B cell (primary cell): ENCODE measurements at regions of chr22 and their contacts with region 1.

Region 1: DNA sequence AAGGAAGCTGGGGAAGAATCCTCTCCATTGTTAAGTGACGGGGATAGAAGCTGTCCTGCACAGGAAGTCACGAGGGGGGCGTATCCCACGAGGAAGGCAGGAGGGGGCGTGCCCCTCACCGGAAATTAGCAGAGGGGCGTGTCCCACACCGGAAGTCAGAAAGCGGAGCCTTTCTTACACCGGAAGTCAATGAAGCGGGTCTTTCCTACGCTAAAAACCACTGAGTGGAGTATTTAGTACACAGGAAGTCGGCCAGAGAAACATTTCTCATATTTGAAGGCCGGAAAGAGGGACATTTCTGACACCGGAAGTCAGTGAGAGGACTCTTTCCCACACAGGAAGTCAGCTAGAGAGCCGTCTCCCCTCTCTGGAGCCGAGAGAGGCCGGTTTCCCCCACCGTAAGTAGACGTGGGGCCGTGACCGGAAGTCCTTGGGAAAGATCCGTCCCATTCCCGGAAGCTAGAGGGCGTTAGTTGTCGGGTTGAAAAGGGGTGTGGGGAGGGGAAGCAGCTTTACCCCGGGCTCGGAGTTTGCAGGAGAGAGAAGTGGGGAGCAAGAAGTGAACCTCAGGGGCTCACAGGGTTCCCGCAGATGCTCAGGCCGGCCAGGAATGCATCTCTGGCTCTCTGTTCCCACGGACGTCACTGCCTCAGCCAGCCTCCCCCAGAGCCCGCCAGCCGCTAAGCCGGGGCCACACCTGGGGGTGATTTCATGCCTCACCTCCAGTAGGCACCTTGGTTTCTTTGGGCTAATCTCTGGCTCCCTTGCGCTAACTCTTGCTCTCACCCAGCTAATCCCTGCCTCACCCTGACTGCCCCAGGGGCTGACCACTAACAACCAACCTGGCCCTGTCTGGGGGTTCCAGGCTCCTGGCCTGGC is 15.4 kb downstream of the MIAT start:
- DNase-seq: peak; percentile 94
- ATAC-seq: peak; percentile 70
- H3K4me3 ChIP-seq: peak overlapping the region; percentile 75 to 94 (median 89)
- H3K4me3 Mint-ChIP-seq: peak overlapping the region; percentile 98
- H3K27ac ChIP-seq: peak overlapping the region; percentile 93 to 97
- H3K27ac Mint-ChIP-seq: peak overlapping the region; percentile 99
- H3K4me1 ChIP-seq: peaks cover 59 to 88% of the 10 kb centered on the region in 2 donors
- H3K4me1 Mint-ChIP-seq: peaks cover 87% of the 10 kb centered on the region
- H3K27me3 ChIP-seq: no peaks in the 10 kb centered on the region
- H3K27me3 Mint-ChIP-seq: no peaks in the 10 kb centered on the region
- CTCF ChIP-seq: peak; percentile 14

Region 2: GRCh38 chr22:26428515-26429457 is 244.0 kb before region 1 on chr22 and contains the start of gene ASPHD2:
- CTCF ChIA-PET with region 1: no interaction called
- POLR2A ChIA-PET with region 1: interaction called, 5 read pairs
- intact Hi-C with region 1: loop called (anchors 1 kb)
- DNase-seq: peak; percentile 95
- ATAC-seq: peak; percentile 78
- H3K4me3 ChIP-seq: peak within 1 kb of the TSS; percentile 30 to 100 (median 82)
- H3K4me3 Mint-ChIP-seq: peak within 1 kb of the TSS; percentile 90
- H3K27ac ChIP-seq: peak within 1 kb of the TSS; percentile 88 to 98
- H3K27ac Mint-ChIP-seq: peak within 1 kb of the TSS; percentile 97
- H3K4me1 ChIP-seq: peaks cover 45 to 48% of the 10 kb centered on the region in 2 donors
- H3K4me1 Mint-ChIP-seq: peaks cover 55% of the 10 kb centered on the region
- H3K27me3 ChIP-seq: no peaks in the 10 kb centered on the region
- H3K27me3 Mint-ChIP-seq: no peaks in the 10 kb centered on the region
- CTCF ChIP-seq: no peak
- total RNA-seq, gene ASPHD2: 7.3 and 8.0 TPM in 2 replicates

Region 3: DNA sequence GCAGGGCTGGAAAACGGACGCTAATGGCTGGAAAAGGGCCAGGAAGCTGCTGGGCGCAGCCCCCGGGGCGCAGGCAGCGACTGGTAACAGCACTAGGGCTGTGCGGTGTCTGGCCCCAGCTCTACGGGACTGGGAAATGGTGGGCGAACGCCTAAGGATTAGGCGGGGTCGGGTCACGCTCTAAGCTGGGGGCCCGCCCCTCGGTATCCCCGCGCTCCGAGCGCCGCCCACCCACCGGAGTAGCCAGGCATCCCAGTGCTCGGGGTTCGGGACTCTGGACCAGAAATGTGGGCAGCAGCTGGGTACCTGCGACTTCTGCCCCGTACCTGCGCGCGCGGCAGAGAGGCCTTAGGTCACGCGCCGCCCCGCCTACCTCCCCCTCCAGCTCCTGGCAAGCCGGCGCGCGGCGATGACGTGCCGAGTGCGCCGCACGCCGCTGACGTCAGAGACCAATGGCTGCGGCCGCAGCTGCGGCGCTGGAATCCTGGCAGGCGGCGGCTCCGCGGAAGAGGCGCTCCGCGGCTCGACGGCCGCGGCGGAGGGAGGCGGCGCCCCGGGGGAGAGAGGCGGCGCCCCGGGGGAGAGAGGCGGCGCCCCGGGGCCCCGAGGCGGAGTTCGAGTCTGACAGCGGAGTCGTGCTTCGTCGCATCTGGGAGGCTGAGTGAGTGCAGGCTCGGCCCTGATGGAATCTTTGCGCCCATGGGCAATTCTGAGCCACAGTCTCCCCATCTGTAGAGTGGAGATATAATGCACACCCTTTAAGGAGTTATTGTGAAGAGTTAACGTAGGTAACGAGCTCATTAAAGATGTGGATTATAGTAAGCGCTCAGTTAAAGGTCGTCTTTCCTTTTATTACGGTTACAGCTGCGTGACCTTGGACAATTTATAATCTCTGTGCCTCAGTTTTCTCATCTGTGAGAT is 189.1 kb before region 1 on chr22 and contains the starts of genes HPS4 and SRRD:
- CTCF ChIA-PET with region 1: interaction called, 8 read pairs
- POLR2A ChIA-PET with region 1: interaction called, 5 read pairs
- intact Hi-C with region 1: loop called (anchors 1 kb)
- DNase-seq: peak; percentile 97
- ATAC-seq: peak; percentile 83
- H3K4me3 ChIP-seq: peak within 1 kb of the TSS; percentile 70 to 98 (median 83)
- H3K4me3 Mint-ChIP-seq: peak within 1 kb of the TSS; percentile 94
- H3K27ac ChIP-seq: peak within 1 kb of the TSS; percentile 90 to 98
- H3K27ac Mint-ChIP-seq: peak within 1 kb of the TSS; percentile 97
- H3K4me1 ChIP-seq: peaks cover 49 to 58% of the 10 kb centered on the region in 2 donors
- H3K4me1 Mint-ChIP-seq: peaks cover 69% of the 10 kb centered on the region
- H3K27me3 ChIP-seq: no peaks in the 10 kb centered on the region
- H3K27me3 Mint-ChIP-seq: no peaks in the 10 kb centered on the region
- CTCF ChIP-seq: no peak
- total RNA-seq, gene HPS4: 61.8 and 76.6 TPM in 2 replicates
- total RNA-seq, gene SRRD: 19.2 and 19.4 TPM in 2 replicates

Region 4: GRCh38 chr22:26494506-26494905 is 178.3 kb before region 1 on chr22:
- CTCF ChIA-PET with region 1: no interaction called
- POLR2A ChIA-PET with region 1: interaction called, 10 read pairs
- intact Hi-C with region 1: no loop called
- DNase-seq: no peak
- ATAC-seq: no peak
- H3K4me3 ChIP-seq: no peak overlapping the region
- H3K4me3 Mint-ChIP-seq: no peak overlapping the region
- H3K27ac ChIP-seq: no peak overlapping the region
- H3K27ac Mint-ChIP-seq: no peak overlapping the region
- H3K4me1 ChIP-seq: no peaks in the 10 kb centered on the region
- H3K4me1 Mint-ChIP-seq: no peaks in the 10 kb centered on the region
- H3K27me3 ChIP-seq: no peaks in the 10 kb centered on the region
- H3K27me3 Mint-ChIP-seq: no peaks in the 10 kb centered on the region
- CTCF ChIP-seq: no peak

Region 5: GRCh38 chr22:26511857-26512793 is 160.7 kb before region 1 on chr22 and contains the start of gene TFIP11:
- CTCF ChIA-PET with region 1: interaction called, 4 read pairs
- POLR2A ChIA-PET with region 1: no interaction called
- intact Hi-C with region 1: loop called (anchors 1 kb)
- DNase-seq: peak; percentile 91
- ATAC-seq: peak; percentile 95
- H3K4me3 ChIP-seq: peak within 1 kb of the TSS; percentile 72 to 97 (median 81)
- H3K4me3 Mint-ChIP-seq: peak within 1 kb of the TSS; percentile 100
- H3K27ac ChIP-seq: peak within 1 kb of the TSS; percentile 62 to 94
- H3K27ac Mint-ChIP-seq: peak within 1 kb of the TSS; percentile 96
- H3K4me1 ChIP-seq: peaks cover 17 to 21% of the 10 kb centered on the region in 2 donors
- H3K4me1 Mint-ChIP-seq: peaks cover 41% of the 10 kb centered on the region
- H3K27me3 ChIP-seq: no peaks in the 10 kb centered on the region
- H3K27me3 Mint-ChIP-seq: no peaks in the 10 kb centered on the region
- CTCF ChIP-seq: no peak
- total RNA-seq, gene TFIP11: 82.8 and 83.4 TPM in 2 replicates

Region 6: DNA sequence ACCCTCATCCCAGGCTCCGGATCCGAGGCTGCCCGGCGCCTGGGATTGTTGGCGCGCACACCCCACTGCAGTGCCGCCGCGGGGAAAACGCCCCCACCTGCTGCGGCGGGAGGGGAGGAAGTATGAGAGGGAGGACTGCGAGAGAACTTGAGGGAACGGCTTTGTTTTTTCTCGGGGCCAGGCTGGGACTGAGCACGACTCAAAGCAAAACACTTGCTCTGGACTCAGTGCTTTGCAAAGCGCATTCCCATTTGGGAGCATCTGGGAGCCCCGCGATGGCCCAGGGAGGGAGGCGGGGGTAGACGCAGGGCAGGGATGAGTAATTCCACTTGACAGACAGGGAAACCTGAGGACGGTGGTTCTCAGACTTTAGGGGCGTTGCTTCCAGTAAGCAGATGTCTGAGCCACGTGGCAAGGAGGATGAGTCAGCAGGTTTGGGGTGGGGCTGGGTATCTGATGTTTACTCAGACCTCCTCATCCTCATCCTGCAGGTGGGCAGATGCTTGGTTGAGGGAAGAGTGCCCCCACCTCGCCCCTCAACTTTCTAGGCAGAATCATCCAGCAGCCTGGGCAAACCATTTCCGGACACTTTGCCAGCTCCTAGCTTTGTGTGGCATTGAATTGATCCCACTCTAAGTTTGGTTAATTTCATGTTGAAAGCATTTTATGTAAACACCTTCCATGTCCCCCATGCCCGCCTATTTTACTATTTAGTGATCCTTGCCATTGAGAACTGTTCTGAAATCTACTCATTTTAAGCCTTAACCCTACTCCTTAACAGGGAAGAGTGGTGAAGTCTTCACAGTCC is 14.0 kb before region 1 on chr22:
- CTCF ChIA-PET with region 1: interaction called, 18 read pairs
- POLR2A ChIA-PET with region 1: interaction called, 3 read pairs
- intact Hi-C with region 1: loop called (anchors 1 kb)
- DNase-seq: peak; percentile 59
- ATAC-seq: peak; percentile 72
- H3K4me3 ChIP-seq: peak overlapping the region; percentile 22 to 72 (median 45)
- H3K4me3 Mint-ChIP-seq: peak overlapping the region; percentile 95
- H3K27ac ChIP-seq: no peak overlapping the region
- H3K27ac Mint-ChIP-seq: peak overlapping the region; percentile 84
- H3K4me1 ChIP-seq: peaks cover 26 to 37% of the 10 kb centered on the region in 2 donors
- H3K4me1 Mint-ChIP-seq: peaks cover 33% of the 10 kb centered on the region
- H3K27me3 ChIP-seq: peaks cover 0 to 32% (median 14%) of the 10 kb centered on the region in 4 experiments
- H3K27me3 Mint-ChIP-seq: peaks cover 12% of the 10 kb centered on the region
- CTCF ChIP-seq: no peak

Region 7: DNA sequence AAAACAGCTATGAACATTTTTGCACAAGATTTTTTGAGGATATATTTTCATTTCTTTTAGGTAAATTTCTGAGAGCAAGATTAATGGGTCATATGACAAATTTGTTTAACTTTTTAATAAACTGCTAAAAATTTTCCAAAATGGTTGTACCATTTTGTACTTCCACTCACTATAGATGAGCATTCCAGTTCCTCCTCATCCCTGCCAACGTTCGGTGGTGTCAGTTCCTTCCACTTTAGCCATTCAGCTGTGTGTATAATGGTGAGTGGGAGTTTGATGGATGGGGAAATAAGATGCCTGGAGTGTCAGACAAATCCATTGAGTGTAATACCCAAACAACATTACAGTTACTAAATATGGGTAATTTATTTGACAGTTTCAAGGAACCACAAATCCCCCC is 34.3 kb after region 1 on chr22:
- CTCF ChIA-PET with region 1: no interaction called
- POLR2A ChIA-PET with region 1: no interaction called
- intact Hi-C with region 1: no loop called
- DNase-seq: no peak
- ATAC-seq: no peak
- H3K4me3 ChIP-seq: no peak overlapping the region
- H3K4me3 Mint-ChIP-seq: no peak overlapping the region
- H3K27ac ChIP-seq: no peak overlapping the region
- H3K27ac Mint-ChIP-seq: no peak overlapping the region
- H3K4me1 ChIP-seq: no peaks in the 10 kb centered on the region
- H3K4me1 Mint-ChIP-seq: peaks cover 37% of the 10 kb centered on the region
- H3K27me3 ChIP-seq: no peaks in the 10 kb centered on the region
- H3K27me3 Mint-ChIP-seq: no peaks in the 10 kb centered on the region
- CTCF ChIP-seq: no peak

Region 8: DNA sequence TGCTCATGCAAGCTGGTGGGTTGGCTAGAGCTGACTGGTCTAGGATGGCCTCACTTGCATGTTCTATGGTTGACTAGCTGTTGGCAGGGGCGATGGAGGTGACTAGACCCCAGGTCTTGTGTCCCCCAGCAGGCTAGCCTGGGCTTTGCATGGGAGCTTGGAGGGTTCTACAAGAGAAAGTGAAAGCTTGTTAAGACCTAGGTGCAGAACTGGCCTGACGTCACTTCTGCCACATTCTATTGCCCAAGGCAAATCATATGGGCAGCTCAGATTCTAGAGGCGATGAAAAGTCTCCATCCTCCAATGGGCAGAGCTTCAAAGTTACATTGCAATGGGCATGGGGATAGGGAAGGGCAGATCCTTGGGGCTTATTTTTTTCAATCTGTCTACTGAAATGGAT is 155.5 kb after region 1 on chr22:
- CTCF ChIA-PET with region 1: no interaction called
- POLR2A ChIA-PET with region 1: no interaction called
- intact Hi-C with region 1: no loop called
- DNase-seq: no peak
- ATAC-seq: no peak
- H3K4me3 ChIP-seq: no peak overlapping the region
- H3K4me3 Mint-ChIP-seq: no peak overlapping the region
- H3K27ac ChIP-seq: no peak overlapping the region
- H3K27ac Mint-ChIP-seq: no peak overlapping the region
- H3K4me1 ChIP-seq: no peaks in the 10 kb centered on the region
- H3K4me1 Mint-ChIP-seq: no peaks in the 10 kb centered on the region
- H3K27me3 ChIP-seq: no peaks in the 10 kb centered on the region
- H3K27me3 Mint-ChIP-seq: no peaks in the 10 kb centered on the region
- CTCF ChIP-seq: no peak